Activated B cell treated with CpG ODN at 0.5 μM for 24 hours (primary cell): ENCODE measurements at regions of chr1 and their contacts with region 1.

Region 1: DNA sequence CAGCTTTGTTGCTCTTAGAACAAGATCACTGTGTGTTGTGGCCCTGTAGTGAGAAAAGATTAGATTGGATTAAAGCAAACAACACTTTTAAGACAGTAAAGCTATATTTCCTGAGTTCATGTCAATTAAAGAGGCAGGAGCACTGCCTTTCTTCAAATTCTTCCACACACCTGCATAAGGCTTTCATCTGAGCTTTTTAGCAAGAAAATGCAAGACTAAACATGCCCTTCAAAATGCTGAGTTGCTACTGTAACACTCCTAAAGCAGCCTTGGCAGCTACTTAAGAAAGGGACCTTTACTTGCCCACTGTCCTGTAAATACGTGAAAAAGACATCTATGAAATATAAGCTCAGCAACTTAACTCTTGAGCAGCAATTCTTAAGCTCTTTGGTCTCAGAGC is 11.8 kb downstream of the DPH5 start:
- DNase-seq: no peak
- ATAC-seq: no peak
- H3K4me3 Mint-ChIP-seq: no peak overlapping the region
- H3K27ac Mint-ChIP-seq: no peak overlapping the region
- H3K4me1 Mint-ChIP-seq: no peaks in the 10 kb centered on the region
- H3K27me3 Mint-ChIP-seq: no peaks in the 10 kb centered on the region
- CTCF ChIP-seq: no peak

Region 2: GRCh38 chr1:100971021-100971420 is 42.8 kb before region 1 on chr1:
- CTCF ChIA-PET with region 1: no interaction called
- POLR2A ChIA-PET with region 1: no interaction called
- intact Hi-C with region 1: no loop called
- DNase-seq: no peak
- ATAC-seq: no peak
- H3K4me3 Mint-ChIP-seq: no peak overlapping the region
- H3K27ac Mint-ChIP-seq: no peak overlapping the region
- H3K4me1 Mint-ChIP-seq: peaks cover 25% of the 10 kb centered on the region
- H3K27me3 Mint-ChIP-seq: no peaks in the 10 kb centered on the region
- CTCF ChIP-seq: no peak

Region 3: DNA sequence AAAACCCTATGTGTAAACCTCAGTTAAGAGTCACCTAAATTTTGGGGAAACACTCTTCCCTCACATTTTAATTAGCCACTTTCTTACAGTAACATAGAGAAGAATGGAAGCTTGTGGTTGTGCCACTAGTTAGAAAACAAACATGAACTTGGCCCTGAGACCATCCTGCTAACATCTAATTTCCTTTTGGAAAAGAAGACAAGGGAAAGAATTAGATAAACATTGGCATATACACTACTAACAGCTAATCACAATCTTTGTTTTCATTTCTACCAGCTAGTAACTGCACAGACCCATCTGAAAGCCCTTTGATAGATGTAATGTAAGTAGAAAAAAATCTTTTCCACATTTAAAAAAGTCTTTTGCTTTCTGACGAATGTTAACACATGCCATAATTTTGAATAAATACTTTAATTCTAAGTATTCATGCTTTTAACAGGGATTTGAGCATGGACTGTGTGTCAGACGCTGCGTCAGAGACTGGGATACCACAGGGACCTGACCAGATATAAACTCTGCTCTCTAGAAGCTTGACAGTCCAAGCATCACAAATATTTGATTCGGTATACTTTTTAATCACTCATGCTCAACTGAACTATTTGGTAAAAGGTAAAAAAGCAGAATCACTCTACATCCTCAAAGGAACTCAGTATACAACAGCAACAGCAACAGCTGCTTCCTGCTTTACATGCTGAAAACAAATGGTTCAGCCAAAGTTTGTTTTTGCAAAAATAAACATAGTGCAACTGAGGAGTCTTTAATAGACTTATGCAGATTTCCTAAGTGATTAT is 18.4 kb before region 1 on chr1:
- CTCF ChIA-PET with region 1: no interaction called
- POLR2A ChIA-PET with region 1: no interaction called
- intact Hi-C with region 1: loop called (anchors 2 kb)
- DNase-seq: no peak
- ATAC-seq: no peak
- H3K4me3 Mint-ChIP-seq: no peak overlapping the region
- H3K27ac Mint-ChIP-seq: peak overlapping the region; percentile 30
- H3K4me1 Mint-ChIP-seq: peaks cover 19% of the 10 kb centered on the region
- H3K27me3 Mint-ChIP-seq: no peaks in the 10 kb centered on the region
- CTCF ChIP-seq: no peak